Heart right ventricle (tissue), 16 donors: ENCODE measurements at regions of chr10 and their contacts with region 1.

Region 1: GRCh38 chr10:121615435-121615793 is 17.2 kb upstream of the FGFR2 start:
- DNase-seq: peak in 1 of 2 donors; percentile 53
- ATAC-seq: peak in 7 of 8 donors; percentile 58 to 91 (median 80)
- H3K4me3 ChIP-seq: no peak overlapping the region
- H3K27ac ChIP-seq: peak overlapping the region in 3 of 10 donors; percentile 1 to 25 (median 14)
- H3K4me1 ChIP-seq: peaks cover 0 to 4% (median 0%) of the 10 kb centered on the region in 9 donors
- H3K27me3 ChIP-seq: peaks cover 0 to 15% (median 11%) of the 10 kb centered on the region in 7 donors
- CTCF ChIP-seq: no peak

Region 2: GRCh38 chr10:121734589-121735045 is 119.2 kb after region 1 on chr10:
- intact Hi-C with region 1: loop called in 1 of 10 experiments (anchors 10 kb)
- DNase-seq: no peak
- ATAC-seq: peak in 3 of 8 donors; percentile 11 to 25 (median 19)
- H3K4me3 ChIP-seq: peak overlapping the region in 2 of 10 donors; percentile 17 to 26
- H3K27ac ChIP-seq: no peak overlapping the region
- H3K4me1 ChIP-seq: peaks cover 0 to 19% (median 8%) of the 10 kb centered on the region in 9 donors
- H3K27me3 ChIP-seq: peaks cover 0 to 47% (median 19%) of the 10 kb centered on the region in 7 donors
- CTCF ChIP-seq: peak; percentile 54 to 81 (median 71)